ENCODE measurements at regions of chr12 and their contacts with region 1.

Region 1: GRCh38 chr12:104456417-104456949 is at the start of gene CHST11:
- DNase-seq: peak; percentile 89
- H3K4me3 Mint-ChIP-seq: peak within 1 kb of the TSS; percentile 99
- H3K27ac Mint-ChIP-seq: peak within 1 kb of the TSS; percentile 97
- H3K4me1 Mint-ChIP-seq: peaks cover 29% of the 10 kb centered on the region
- H3K27me3 Mint-ChIP-seq: no peaks in the 10 kb centered on the region
- total RNA-seq, gene CHST11: 58.3 to 59.0 TPM

Region 2: DNA sequence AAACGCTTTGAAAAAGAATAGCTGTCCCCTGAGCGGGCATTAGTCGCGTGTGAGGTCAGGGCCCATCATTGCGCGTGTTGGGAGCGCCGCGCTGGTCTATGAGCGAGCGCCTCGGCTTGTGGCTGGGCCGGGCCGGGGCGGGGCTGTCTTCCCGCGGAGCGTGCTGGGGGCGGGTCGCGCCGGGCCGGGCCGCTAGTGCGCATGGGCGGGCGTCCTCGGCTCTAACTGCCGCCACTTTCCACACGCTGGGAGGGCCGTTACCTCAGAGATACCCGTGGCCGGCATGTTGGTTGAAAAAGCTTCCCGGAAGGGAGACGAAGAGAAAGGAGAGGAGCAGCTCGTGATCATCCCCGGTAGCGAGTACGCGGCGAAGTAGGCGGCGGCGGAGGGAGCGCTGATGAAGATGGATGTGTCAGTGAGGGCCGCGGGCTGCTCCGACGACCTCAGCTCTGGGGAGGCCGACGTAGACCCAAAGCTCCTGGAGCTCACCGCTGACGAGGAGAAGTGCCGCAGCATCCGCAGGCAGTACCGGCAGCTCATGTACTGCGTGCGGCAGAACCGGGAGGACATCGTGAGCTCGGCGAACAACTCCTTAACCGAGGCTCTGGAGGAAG is 152.8 kb before region 1 on chr12 and contains the start of gene EID3:
- CTCF ChIA-PET with region 1: no interaction called
- POLR2A ChIA-PET with region 1: no interaction called
- intact Hi-C with region 1: loop called (anchors 5 kb)
- DNase-seq: peak; percentile 94
- H3K4me3 Mint-ChIP-seq: peak within 1 kb of the TSS; percentile 89
- H3K27ac Mint-ChIP-seq: peak within 1 kb of the TSS; percentile 93
- H3K4me1 Mint-ChIP-seq: peaks cover 60% of the 10 kb centered on the region
- H3K27me3 Mint-ChIP-seq: no peaks in the 10 kb centered on the region
- total RNA-seq, gene EID3: 4.7 TPM

Region 3: GRCh38 chr12:104473374-104473983 is 17.0 kb after region 1 on chr12:
- CTCF ChIA-PET with region 1: interaction called, 12 read pairs
- POLR2A ChIA-PET with region 1: interaction called, 33 read pairs
- intact Hi-C with region 1: no loop called
- DNase-seq: peak; percentile 40
- H3K4me3 Mint-ChIP-seq: peak overlapping the region; percentile 44
- H3K27ac Mint-ChIP-seq: peak overlapping the region; percentile 6
- H3K4me1 Mint-ChIP-seq: peaks cover 79% of the 10 kb centered on the region
- H3K27me3 Mint-ChIP-seq: no peaks in the 10 kb centered on the region

Region 4: GRCh38 chr12:104478396-104479122 is 22.1 kb after region 1 on chr12:
- CTCF ChIA-PET with region 1: interaction called, 12 read pairs
- POLR2A ChIA-PET with region 1: interaction called, 33 read pairs
- intact Hi-C with region 1: no loop called
- DNase-seq: peak; percentile 50
- H3K4me3 Mint-ChIP-seq: peak overlapping the region; percentile 84
- H3K27ac Mint-ChIP-seq: peak overlapping the region; percentile 98
- H3K4me1 Mint-ChIP-seq: peaks cover 86% of the 10 kb centered on the region
- H3K27me3 Mint-ChIP-seq: no peaks in the 10 kb centered on the region

Region 5: GRCh38 chr12:104569346-104570173 is 113.1 kb after region 1 on chr12:
- CTCF ChIA-PET with region 1: interaction called, 5 read pairs
- POLR2A ChIA-PET with region 1: interaction called, 6 read pairs
- intact Hi-C with region 1: loop called (anchors 2 kb)
- DNase-seq: peak; percentile 70
- H3K4me3 Mint-ChIP-seq: peak overlapping the region; percentile 1
- H3K27ac Mint-ChIP-seq: peak overlapping the region; percentile 46
- H3K4me1 Mint-ChIP-seq: peaks cover 62% of the 10 kb centered on the region
- H3K27me3 Mint-ChIP-seq: no peaks in the 10 kb centered on the region

Region 6: GRCh38 chr12:104604070-104604994 is 147.8 kb after region 1 on chr12:
- CTCF ChIA-PET with region 1: interaction called, 14 read pairs
- POLR2A ChIA-PET with region 1: interaction called, 12 read pairs
- intact Hi-C with region 1: loop called (anchors 1 kb)
- DNase-seq: peak; percentile 81
- H3K4me3 Mint-ChIP-seq: peak overlapping the region; percentile 19
- H3K27ac Mint-ChIP-seq: peak overlapping the region; percentile 92
- H3K4me1 Mint-ChIP-seq: peaks cover 47% of the 10 kb centered on the region
- H3K27me3 Mint-ChIP-seq: no peaks in the 10 kb centered on the region